ENCODE measurements at regions of chr9 and their contacts with region 1.

Region 1: GRCh38 chr9:128322404-128323211 is at the starts of genes COQ4 and TRUB2:
- DNase-seq: peak; percentile 98
- H3K4me3 Mint-ChIP-seq: peak within 1 kb of the TSS; percentile 91
- H3K27ac Mint-ChIP-seq: peak within 1 kb of the TSS; percentile 97
- H3K4me1 Mint-ChIP-seq: peaks cover 9% of the 10 kb centered on the region
- H3K27me3 Mint-ChIP-seq: no peaks in the 10 kb centered on the region
- total RNA-seq, gene COQ4: 60.7 and 61.4 TPM in 2 replicates
- total RNA-seq, gene TRUB2: 40.4 and 43.0 TPM in 2 replicates

Region 2: DNA sequence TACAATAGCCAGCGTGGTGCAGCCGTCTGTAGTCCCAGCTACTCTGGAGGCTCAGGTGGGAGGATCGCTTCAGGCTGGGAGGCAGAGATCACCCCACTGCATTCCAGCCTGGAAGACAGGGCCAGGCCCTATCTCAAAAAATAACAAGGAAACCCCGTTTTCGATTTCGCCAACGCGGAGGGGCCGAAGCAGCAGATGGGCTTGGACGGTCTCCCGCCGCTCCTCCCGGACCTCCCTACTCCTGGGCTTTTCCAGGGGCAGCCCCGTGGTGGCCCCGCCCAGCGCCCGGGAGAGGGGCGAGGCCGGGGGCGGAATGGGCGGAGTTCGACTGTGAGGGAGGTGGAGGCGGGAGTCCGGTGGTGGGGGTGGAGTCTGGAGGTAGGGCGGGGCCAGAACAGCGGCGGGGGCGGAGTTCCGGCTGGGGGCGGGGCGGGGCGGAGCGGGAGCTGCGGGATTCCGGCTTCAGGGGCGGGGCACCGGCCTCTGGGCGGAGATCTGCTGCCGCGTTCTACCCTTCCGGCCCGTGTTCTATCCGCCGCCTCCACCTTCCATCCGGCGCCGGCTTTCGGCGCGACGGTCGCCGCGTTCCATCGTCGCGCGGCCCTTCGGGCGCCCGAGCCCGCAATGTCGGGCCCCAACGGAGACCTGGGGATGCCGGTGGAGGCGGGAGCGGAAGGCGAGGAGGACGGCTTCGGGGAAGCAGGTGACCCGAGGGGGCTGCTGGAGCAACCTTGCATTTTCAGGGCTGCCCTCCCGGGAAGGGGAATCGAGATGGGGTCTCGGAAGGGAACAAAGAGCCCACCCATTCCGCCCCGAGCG is 162.6 kb before region 1 on chr9 and contains the start of gene BBLN:
- intact Hi-C with region 1: loop called (anchors 2 kb)
- DNase-seq: peak; percentile 98
- H3K4me3 Mint-ChIP-seq: peak within 1 kb of the TSS; percentile 83
- H3K27ac Mint-ChIP-seq: peak within 1 kb of the TSS; percentile 91
- H3K4me1 Mint-ChIP-seq: peaks cover 23% of the 10 kb centered on the region
- H3K27me3 Mint-ChIP-seq: no peaks in the 10 kb centered on the region
- total RNA-seq, gene BBLN: 89.3 and 91.4 TPM in 2 replicates

Region 3: GRCh38 chr9:128275996-128276573 is 46.5 kb before region 1 on chr9 and contains the starts of genes GOLGA2 and SWI5:
- intact Hi-C with region 1: loop called (anchors 1 kb)
- DNase-seq: peak; percentile 100
- H3K4me3 Mint-ChIP-seq: peak within 1 kb of the TSS; percentile 93
- H3K27ac Mint-ChIP-seq: peak within 1 kb of the TSS; percentile 95
- H3K4me1 Mint-ChIP-seq: peaks cover 45% of the 10 kb centered on the region
- H3K27me3 Mint-ChIP-seq: peaks cover 3% of the 10 kb centered on the region
- total RNA-seq, gene GOLGA2: 44.1 and 50.4 TPM in 2 replicates
- total RNA-seq, gene SWI5: 13.6 and 14.3 TPM in 2 replicates

Region 4: GRCh38 chr9:128504485-128505413 is 182.1 kb after region 1 on chr9 and contains the start of gene GLE1:
- intact Hi-C with region 1: loop called (anchors 1 kb)
- DNase-seq: peak; percentile 100
- H3K4me3 Mint-ChIP-seq: peak within 1 kb of the TSS; percentile 96
- H3K27ac Mint-ChIP-seq: peak within 1 kb of the TSS; percentile 95
- H3K4me1 Mint-ChIP-seq: peaks cover 25% of the 10 kb centered on the region
- H3K27me3 Mint-ChIP-seq: no peaks in the 10 kb centered on the region
- total RNA-seq, gene GLE1: 53.3 and 54.1 TPM in 2 replicates